ENCODE measurements at regions of chr7 and their contacts with region 1.

Region 1: DNA sequence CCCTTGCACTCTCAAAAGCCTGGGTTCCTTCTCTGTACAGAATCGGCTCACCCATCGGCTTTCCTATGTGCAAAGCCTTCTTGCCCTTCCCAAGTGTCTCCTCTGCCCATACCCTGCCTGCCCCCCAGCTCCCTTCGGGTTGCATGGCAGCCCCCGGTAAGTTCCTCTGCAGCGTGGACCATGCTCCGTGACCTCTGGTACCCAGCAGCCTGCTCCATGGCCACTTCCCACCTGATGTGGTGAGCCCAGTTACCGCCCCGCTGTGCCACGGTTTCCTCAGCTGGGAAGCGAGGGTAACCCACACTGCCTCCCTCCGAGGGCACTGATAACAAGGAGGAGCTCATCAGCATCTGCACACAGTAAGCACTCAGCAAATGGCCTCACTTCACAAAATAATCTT is 106.8 kb upstream of the DDC start:
- DNase-seq: no peak
- H3K4me3 ChIP-seq: no peak overlapping the region
- H3K4me3 Mint-ChIP-seq: no peak overlapping the region
- H3K27ac ChIP-seq: no peak overlapping the region
- H3K27ac Mint-ChIP-seq: no peak overlapping the region
- H3K4me1 ChIP-seq: no peaks in the 10 kb centered on the region
- H3K4me1 Mint-ChIP-seq: no peaks in the 10 kb centered on the region
- H3K27me3 ChIP-seq: no peaks in the 10 kb centered on the region
- H3K27me3 Mint-ChIP-seq: peaks cover 3 to 6% of the 10 kb centered on the region in 2 donors

Region 2: GRCh38 chr7:50661345-50662040 is 10.6 kb before region 1 on chr7:
- CTCF ChIA-PET with region 1: interaction called, 11 read pairs
- POLR2A ChIA-PET with region 1: no interaction called
- DNase-seq: peak in 1 of 5 donors; percentile 21
- H3K4me3 ChIP-seq: peak overlapping the region; percentile 46
- H3K4me3 Mint-ChIP-seq: peak overlapping the region; percentile 51 to 96 (median 89)
- H3K27ac ChIP-seq: no peak overlapping the region
- H3K27ac Mint-ChIP-seq: peak overlapping the region; percentile 67 to 96 (median 93)
- H3K4me1 ChIP-seq: peaks cover 57% of the 10 kb centered on the region
- H3K4me1 Mint-ChIP-seq: peaks cover 57 to 61% (median 58%) of the 10 kb centered on the region in 3 donors
- H3K27me3 ChIP-seq: no peaks in the 10 kb centered on the region
- H3K27me3 Mint-ChIP-seq: no peaks in the 10 kb centered on the region

Measured in CD8-positive, alpha-beta memory T cell (primary cell).